K562 (cell line): ENCODE measurements at regions of chr10 and their contacts with region 1.

Region 1: DNA sequence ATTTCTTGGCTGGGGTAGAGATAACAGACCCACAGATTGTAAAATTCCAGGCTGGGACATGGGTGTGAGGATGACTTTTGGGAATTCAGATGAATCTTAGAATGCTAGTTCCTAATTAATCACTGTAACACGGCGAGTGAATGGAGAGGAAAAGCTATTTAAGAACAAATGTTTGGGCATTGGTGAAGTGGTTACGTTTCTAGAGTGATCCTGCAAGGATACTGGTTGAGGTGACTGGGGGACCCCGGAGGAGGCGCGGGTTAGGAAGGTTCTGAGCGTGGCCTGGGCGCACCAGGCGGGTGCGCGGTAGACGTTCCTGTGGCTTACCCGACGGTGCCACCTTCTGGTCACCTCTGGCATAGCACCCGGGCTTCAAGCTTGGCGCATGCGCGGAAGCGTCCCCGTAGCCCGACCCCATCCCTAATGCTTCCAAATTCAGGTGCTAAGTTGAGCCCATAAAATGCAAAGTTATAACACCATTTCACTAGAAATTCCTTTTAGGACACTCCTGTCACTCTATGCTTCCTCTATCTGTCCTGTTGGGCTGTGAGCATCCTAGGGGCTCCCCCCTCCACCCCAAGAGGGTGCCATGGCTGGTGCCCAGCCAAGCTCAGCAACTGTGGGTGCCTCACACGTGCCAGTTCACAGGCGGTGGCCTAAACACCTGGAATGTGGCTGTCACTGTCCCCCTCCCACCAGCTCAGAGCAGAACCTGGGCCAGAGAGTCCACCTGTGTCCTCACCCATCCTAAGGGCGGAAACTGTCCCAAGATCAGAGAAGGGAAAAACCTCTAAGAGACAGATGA is 104.5 kb downstream of the PTPRE start:
- DNase-seq: peak; percentile 72 to 93 (median 90)
- ATAC-seq: peak; percentile 96
- H3K4me3 ChIP-seq: no peak overlapping the region
- H3K27ac ChIP-seq: no peak overlapping the region
- H3K4me1 ChIP-seq: no peaks in the 10 kb centered on the region; a peak in 1 of 5 replicates
- H3K27me3 ChIP-seq: peaks cover 0 to 5% of the 10 kb centered on the region in 2 experiments; a peak in 1 of 5 replicates
- CTCF ChIP-seq: peak; percentile 86 to 90 (median 87)
- EP300 ChIP-seq: no peak
- POLR2A ChIP-seq: no peak
- RAD21 ChIP-seq: peak; percentile 80 to 82

Region 2: GRCh38 chr10:127715782-127716378 is 295.5 kb before region 1 on chr10:
- CTCF ChIA-PET with region 1: no interaction called
- POLR2A ChIA-PET with region 1: no interaction called
- in situ Hi-C with region 1: no loop called
- intact Hi-C with region 1: loop called (anchors 10 kb)
- DNase-seq: peak in 1 of 4 experiments; percentile 7
- ATAC-seq: no peak
- H3K4me3 ChIP-seq: no peak overlapping the region
- H3K27ac ChIP-seq: no peak overlapping the region
- H3K4me1 ChIP-seq: no peaks in the 10 kb centered on the region
- H3K27me3 ChIP-seq: no peaks in the 10 kb centered on the region
- CTCF ChIP-seq: peak in 1 of 3 experiments; percentile 34; a peak in 2 of 6 replicates
- EP300 ChIP-seq: no peak
- POLR2A ChIP-seq: no peak
- RAD21 ChIP-seq: peak in 1 of 2 experiments; percentile 37; a peak in 2 of 4 replicates

Region 3: GRCh38 chr10:127813290-127813689 is 198.1 kb before region 1 on chr10:
- CTCF ChIA-PET with region 1: no interaction called
- POLR2A ChIA-PET with region 1: no interaction called
- in situ Hi-C with region 1: no loop called
- intact Hi-C with region 1: no loop called
- DNase-seq: no peak
- ATAC-seq: no peak
- H3K4me3 ChIP-seq: no peak overlapping the region
- H3K27ac ChIP-seq: no peak overlapping the region
- H3K4me1 ChIP-seq: no peaks in the 10 kb centered on the region
- H3K27me3 ChIP-seq: no peaks in the 10 kb centered on the region
- CTCF ChIP-seq: no peak
- EP300 ChIP-seq: no peak
- POLR2A ChIP-seq: no peak
- RAD21 ChIP-seq: no peak

Region 4: DNA sequence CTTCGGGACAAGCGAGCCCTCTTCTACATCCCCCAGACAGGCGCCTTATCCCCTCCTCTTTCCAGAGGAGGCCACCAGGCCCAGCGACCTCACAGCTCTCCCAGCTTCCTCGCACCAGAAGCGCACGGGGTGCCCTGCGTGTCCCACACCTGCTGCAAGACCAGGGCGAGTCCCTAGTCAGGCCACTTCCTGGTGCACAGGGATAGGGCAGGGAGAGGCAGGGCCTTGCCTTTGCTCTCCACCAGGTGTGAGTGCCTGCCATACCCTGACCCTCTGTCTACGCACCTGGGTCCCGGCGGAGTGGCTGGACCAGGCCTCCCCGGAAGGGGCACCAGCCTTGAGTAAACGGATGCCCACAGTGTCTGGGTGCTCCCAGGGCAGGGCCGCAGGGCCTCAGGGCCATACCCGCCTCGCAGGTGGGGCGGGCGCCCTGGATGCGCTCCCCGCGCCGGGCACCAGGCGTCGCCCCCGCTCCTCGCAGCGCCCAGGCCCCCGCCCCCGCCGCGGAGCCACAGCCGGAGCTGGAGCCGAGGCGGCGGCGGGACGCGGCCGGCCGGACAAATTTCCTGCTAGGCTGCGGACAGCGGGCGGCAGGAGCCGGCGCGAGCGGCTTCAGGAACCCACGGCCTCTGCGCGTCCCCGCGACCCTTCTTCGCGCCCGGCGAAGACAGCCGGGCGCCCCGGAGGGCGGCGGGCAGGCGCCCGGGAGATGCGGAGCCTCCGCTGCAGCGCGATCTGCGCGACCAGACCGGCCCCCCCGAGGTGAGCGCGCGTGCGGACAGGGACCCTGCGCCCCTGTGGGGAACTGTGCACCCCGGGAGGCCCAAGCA is 104.6 kb before region 1 on chr10 and contains the start of gene PTPRE:
- CTCF ChIA-PET with region 1: interaction called, 11 read pairs
- POLR2A ChIA-PET with region 1: no interaction called
- in situ Hi-C with region 1: no loop called
- intact Hi-C with region 1: loop called (anchors 1 kb)
- DNase-seq: peak; percentile 17 to 59 (median 53)
- ATAC-seq: peak; percentile 96
- H3K4me3 ChIP-seq: no peak within 1 kb of the TSS
- H3K27ac ChIP-seq: no peak within 1 kb of the TSS
- H3K4me1 ChIP-seq: peaks cover 0 to 5% of the 10 kb centered on the region in 2 experiments; a peak in 1 of 5 replicates
- H3K27me3 ChIP-seq: no peaks in the 10 kb centered on the region; a peak in 1 of 5 replicates
- CTCF ChIP-seq: peak in 2 of 3 experiments; percentile 35 to 53; a peak in 4 of 6 replicates
- EP300 ChIP-seq: no peak
- POLR2A ChIP-seq: no peak
- RAD21 ChIP-seq: peak; percentile 56 to 72; a peak in 3 of 4 replicates
- polyA plus RNA-seq, gene PTPRE: 0.01 TPM in 1 of 2 experiments, not detected in the other

Region 5: GRCh38 chr10:128069351-128070051 is 58.1 kb after region 1 on chr10:
- CTCF ChIA-PET with region 1: no interaction called
- POLR2A ChIA-PET with region 1: no interaction called
- in situ Hi-C with region 1: no loop called
- intact Hi-C with region 1: loop called (anchors 10 kb)
- DNase-seq: peak; percentile 54 to 70 (median 64)
- ATAC-seq: peak; percentile 93
- H3K4me3 ChIP-seq: no peak overlapping the region
- H3K27ac ChIP-seq: no peak overlapping the region
- H3K4me1 ChIP-seq: peaks cover 0 to 5% of the 10 kb centered on the region in 2 experiments; a peak in 2 of 5 replicates
- H3K27me3 ChIP-seq: peaks cover 3 to 30% of the 10 kb centered on the region in 2 experiments; a peak in 4 of 5 replicates
- CTCF ChIP-seq: peak; percentile 57 to 81 (median 71)
- EP300 ChIP-seq: no peak
- POLR2A ChIP-seq: no peak
- RAD21 ChIP-seq: peak; percentile 71 to 83

Region 6: DNA sequence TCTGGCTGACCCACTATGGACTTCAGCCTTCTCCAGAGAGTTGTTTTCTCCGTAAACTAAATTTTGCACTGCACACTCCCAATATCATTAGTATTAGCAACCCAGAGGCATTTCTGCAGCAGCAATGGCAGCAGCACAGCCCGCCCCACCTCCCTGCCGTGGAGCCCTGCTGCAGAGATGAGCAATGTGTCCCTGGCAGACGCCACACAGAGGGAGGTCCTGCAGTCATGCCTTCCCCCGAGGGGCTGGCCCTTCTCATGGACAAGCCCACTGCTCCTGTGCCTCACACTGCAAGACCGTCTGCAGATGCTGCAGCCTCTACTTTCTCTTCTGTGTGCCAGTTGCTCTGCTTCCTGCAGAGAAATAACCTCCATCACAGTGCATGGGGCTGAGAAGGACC is 508.2 kb after region 1 on chr10:
- CTCF ChIA-PET with region 1: no interaction called
- POLR2A ChIA-PET with region 1: no interaction called
- in situ Hi-C with region 1: no loop called
- intact Hi-C with region 1: no loop called
- DNase-seq: no peak
- ATAC-seq: no peak
- H3K4me3 ChIP-seq: no peak overlapping the region
- H3K27ac ChIP-seq: no peak overlapping the region
- H3K4me1 ChIP-seq: peaks cover 0 to 3% of the 10 kb centered on the region in 2 experiments; a peak in 2 of 5 replicates
- H3K27me3 ChIP-seq: no peaks in the 10 kb centered on the region
- CTCF ChIP-seq: no peak
- EP300 ChIP-seq: no peak
- POLR2A ChIP-seq: no peak
- RAD21 ChIP-seq: no peak